CD8-positive, alpha-beta T cell (primary cell): ENCODE measurements at regions of chr19 and their contacts with region 1.

Region 1: GRCh38 chr19:37217855-37218591 is at the start of gene ZNF383:
- DNase-seq: peak; percentile 68 to 92 (median 82)
- ATAC-seq: peak; percentile 88
- H3K4me3 ChIP-seq: peak within 1 kb of the TSS; percentile 71 to 92
- H3K4me3 Mint-ChIP-seq: peak within 1 kb of the TSS; percentile 87
- H3K27ac ChIP-seq: peak within 1 kb of the TSS; percentile 69 to 92
- H3K27ac Mint-ChIP-seq: peak within 1 kb of the TSS; percentile 93
- H3K4me1 ChIP-seq: peaks cover 11% of the 10 kb centered on the region
- H3K4me1 Mint-ChIP-seq: peaks cover 31% of the 10 kb centered on the region
- H3K27me3 ChIP-seq: no peaks in the 10 kb centered on the region
- H3K27me3 Mint-ChIP-seq: no peaks in the 10 kb centered on the region
- CTCF ChIP-seq: no peak
- total RNA-seq, gene ZNF383: 17.5 to 18.9 TPM

Region 2: GRCh38 chr19:36132489-36132891 is 1085.5 kb before region 1 on chr19:
- CTCF ChIA-PET with region 1: no interaction called
- POLR2A ChIA-PET with region 1: no interaction called
- intact Hi-C with region 1: loop called in 1 of 2 experiments (anchors 10 kb)
- DNase-seq: peak in 4 of 9 experiments; percentile 19 to 60 (median 37)
- ATAC-seq: no peak
- H3K4me3 ChIP-seq: no peak overlapping the region
- H3K4me3 Mint-ChIP-seq: no peak overlapping the region
- H3K27ac ChIP-seq: peak overlapping the region in 1 of 2 experiments; percentile 54
- H3K27ac Mint-ChIP-seq: no peak overlapping the region
- H3K4me1 ChIP-seq: peaks cover 5% of the 10 kb centered on the region
- H3K4me1 Mint-ChIP-seq: peaks cover 15% of the 10 kb centered on the region
- H3K27me3 ChIP-seq: no peaks in the 10 kb centered on the region
- H3K27me3 Mint-ChIP-seq: no peaks in the 10 kb centered on the region
- CTCF ChIP-seq: no peak

Region 3: GRCh38 chr19:36528194-36528920 is 689.7 kb before region 1 on chr19 and contains the start of gene ZNF260:
- CTCF ChIA-PET with region 1: no interaction called
- POLR2A ChIA-PET with region 1: no interaction called
- intact Hi-C with region 1: loop called (anchors 2 kb)
- DNase-seq: peak; percentile 77 to 96 (median 92)
- ATAC-seq: peak; percentile 90
- H3K4me3 ChIP-seq: peak within 1 kb of the TSS; percentile 64 to 85
- H3K4me3 Mint-ChIP-seq: peak within 1 kb of the TSS; percentile 99
- H3K27ac ChIP-seq: peak within 1 kb of the TSS; percentile 52 to 84
- H3K27ac Mint-ChIP-seq: peak within 1 kb of the TSS; percentile 96
- H3K4me1 ChIP-seq: peaks cover 21% of the 10 kb centered on the region
- H3K4me1 Mint-ChIP-seq: peaks cover 28% of the 10 kb centered on the region
- H3K27me3 ChIP-seq: no peaks in the 10 kb centered on the region
- H3K27me3 Mint-ChIP-seq: no peaks in the 10 kb centered on the region
- CTCF ChIP-seq: no peak
- total RNA-seq, gene ZNF260: 2.8 to 4.6 TPM

Region 4: DNA sequence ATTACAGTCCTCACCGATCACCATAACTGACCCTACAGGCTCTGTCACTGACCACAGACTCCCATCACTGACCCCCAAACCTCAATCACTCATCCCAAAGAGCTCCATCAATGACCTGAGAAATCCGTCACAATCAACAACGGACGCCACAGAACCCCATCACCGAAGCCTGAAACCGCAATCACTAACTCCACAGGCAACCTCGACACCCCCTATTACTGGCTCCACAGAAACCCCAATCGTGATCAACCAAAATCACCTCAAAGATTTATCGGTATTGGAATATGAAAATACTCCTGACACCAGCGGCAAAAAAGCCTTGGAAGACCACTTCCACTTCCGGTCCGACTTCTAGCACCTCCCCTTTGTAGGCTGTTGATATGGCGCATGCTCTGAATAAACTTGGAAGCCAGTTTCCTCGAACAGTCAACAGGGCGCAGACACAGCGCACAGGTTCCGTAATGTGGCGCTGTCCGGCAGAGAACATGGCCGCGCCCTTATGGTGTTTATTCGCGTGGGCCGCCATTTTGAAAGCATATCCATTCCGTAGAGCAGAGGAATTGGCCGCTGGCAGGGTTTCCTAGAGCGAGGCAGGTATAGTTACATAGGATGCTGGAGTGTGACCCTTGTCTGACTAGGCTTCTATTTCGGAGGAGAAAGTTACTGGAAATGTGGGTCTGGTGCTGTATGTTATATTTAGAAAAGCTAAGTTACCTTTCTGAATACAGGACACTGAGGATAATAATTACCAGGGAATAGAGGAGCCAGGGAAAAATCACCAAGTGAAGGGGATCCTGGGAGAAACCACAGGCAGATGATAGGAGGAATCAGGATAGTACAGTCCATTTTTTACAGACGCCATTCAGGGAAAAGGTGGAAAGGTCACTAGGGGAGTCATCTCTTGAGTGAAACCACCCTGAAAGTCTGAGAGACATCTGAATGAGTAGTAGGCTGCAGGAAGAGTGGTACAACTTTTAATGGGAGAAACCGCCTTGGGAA is 45.4 kb before region 1 on chr19 and contains the start of gene ZNF585A:
- CTCF ChIA-PET with region 1: no interaction called
- POLR2A ChIA-PET with region 1: no interaction called
- intact Hi-C with region 1: loop called (anchors 1 kb)
- DNase-seq: peak; percentile 83 to 98 (median 90)
- ATAC-seq: peak; percentile 99
- H3K4me3 ChIP-seq: peak within 1 kb of the TSS; percentile 85 to 91
- H3K4me3 Mint-ChIP-seq: no peak within 1 kb of the TSS
- H3K27ac ChIP-seq: peak within 1 kb of the TSS; percentile 74 to 89
- H3K27ac Mint-ChIP-seq: no peak within 1 kb of the TSS
- H3K4me1 ChIP-seq: no peaks in the 10 kb centered on the region
- H3K4me1 Mint-ChIP-seq: peaks cover 6% of the 10 kb centered on the region
- H3K27me3 ChIP-seq: no peaks in the 10 kb centered on the region
- H3K27me3 Mint-ChIP-seq: no peaks in the 10 kb centered on the region
- CTCF ChIP-seq: no peak
- total RNA-seq, gene ZNF585A: 5.3 TPM

Region 5: DNA sequence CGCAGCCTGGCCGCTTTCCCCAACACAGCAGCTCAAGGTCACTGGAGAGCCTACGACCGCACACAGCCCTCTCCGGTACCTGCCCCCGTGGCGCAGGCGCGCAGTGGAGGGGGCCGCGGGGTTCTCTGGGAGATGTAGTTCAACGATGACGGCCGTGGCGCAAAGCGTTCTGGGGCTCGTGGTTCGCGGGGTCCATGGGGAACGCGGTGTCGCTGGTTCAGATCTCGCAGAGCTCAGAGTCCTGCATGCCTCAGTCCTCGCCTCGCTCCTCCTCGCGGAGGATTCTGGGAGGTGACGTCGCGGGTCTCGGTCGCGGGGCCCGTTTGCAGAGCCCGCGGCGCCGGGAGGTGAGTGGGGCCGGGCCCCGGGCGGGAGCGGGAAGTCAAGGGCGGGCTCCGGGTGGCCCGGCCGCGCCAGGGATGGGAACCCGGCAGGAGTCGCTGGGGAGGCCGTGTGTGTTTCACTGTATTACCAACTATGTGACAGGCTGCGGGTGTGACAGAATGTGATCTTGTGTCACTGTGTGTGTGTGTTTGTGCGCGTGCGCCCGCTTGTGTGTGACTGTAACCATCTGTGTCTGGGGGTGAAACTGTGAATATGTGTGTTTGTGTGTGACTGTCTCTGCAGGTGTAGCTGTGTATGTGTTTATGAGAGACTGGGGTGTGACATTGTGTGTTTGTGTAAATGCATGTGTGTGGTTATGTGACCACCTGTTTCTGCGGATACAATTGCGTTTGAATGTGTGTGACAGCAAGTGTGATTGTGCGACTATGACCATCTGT is 153.0 kb after region 1 on chr19 and contains the start of gene ZNF527:
- CTCF ChIA-PET with region 1: no interaction called
- POLR2A ChIA-PET with region 1: interaction called, 4 read pairs
- intact Hi-C with region 1: loop called in 1 of 2 experiments (anchors 2 kb)
- DNase-seq: peak; percentile 94 to 98 (median 97)
- ATAC-seq: peak; percentile 92
- H3K4me3 ChIP-seq: peak within 1 kb of the TSS; percentile 80 to 95
- H3K4me3 Mint-ChIP-seq: peak within 1 kb of the TSS; percentile 99
- H3K27ac ChIP-seq: peak within 1 kb of the TSS; percentile 82 to 90
- H3K27ac Mint-ChIP-seq: peak within 1 kb of the TSS; percentile 96
- H3K4me1 ChIP-seq: peaks cover 7% of the 10 kb centered on the region
- H3K4me1 Mint-ChIP-seq: peaks cover 20% of the 10 kb centered on the region
- H3K27me3 ChIP-seq: no peaks in the 10 kb centered on the region
- H3K27me3 Mint-ChIP-seq: no peaks in the 10 kb centered on the region
- CTCF ChIP-seq: no peak
- total RNA-seq, gene ZNF527: 12.9 to 14.2 TPM